Posterior vena cava (tissue), 2 donors: ENCODE measurements at regions of chr1 and their contacts with region 1.

Region 1: DNA sequence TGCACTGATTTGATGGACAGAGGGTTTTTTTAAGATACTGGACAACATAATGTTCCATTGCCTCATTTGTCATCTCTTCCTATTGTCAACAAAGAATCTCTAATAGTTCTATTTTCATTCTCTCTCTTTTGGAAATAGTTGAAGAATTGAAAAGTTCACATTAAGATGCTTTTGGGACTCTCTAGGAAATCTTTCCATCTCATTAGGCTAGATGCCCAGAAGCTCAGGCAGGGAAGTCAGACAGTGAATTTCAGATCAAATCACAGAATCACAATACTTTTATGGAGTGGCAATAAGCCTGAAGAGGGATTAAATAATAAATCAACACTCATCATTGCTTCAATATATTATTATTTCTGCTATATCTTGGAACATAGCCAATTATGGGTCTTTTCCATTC is 29.2 kb downstream of the NEGR1 start:
- DNase-seq: no peak

Region 2: DNA sequence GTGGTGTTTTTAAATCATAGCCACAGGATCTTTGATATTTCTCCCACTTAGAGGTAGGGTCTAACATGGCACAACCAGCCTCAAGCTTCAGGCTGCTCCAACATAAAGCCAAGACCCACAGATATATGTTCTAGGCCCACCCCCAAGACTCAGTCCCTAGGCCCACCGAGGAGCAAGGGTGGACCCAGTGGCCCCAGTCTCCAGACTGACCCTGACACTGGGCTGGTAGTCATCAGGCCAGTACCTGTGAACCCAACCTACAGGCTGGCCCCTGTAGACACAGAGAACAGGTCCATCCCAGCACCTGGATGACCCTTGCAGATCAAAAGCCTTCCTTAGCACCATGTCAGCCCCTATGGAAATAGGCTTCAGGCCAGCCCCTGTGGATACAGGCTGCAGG is 31.3 kb before region 1 on chr1:
- intact Hi-C with region 1: loop called in 1 of 2 experiments (anchors 2 kb)
- DNase-seq: peak; percentile 52